Endothelial cell of umbilical vein (primary cell): ENCODE measurements at regions of chr3 and their contacts with region 1.

Region 1: GRCh38 chr3:124878561-124879336 is 8.4 kb downstream of the ITGB5 start:
- DNase-seq: peak; percentile 94
- H3K4me3 ChIP-seq: no peak overlapping the region
- H3K27ac ChIP-seq: peak overlapping the region; percentile 91
- H3K4me1 ChIP-seq: peaks cover 34% of the 10 kb centered on the region
- H3K27me3 ChIP-seq: no peaks in the 10 kb centered on the region
- CTCF ChIP-seq: no peak
- POLR2A ChIP-seq: peak; percentile 57

Region 2: DNA sequence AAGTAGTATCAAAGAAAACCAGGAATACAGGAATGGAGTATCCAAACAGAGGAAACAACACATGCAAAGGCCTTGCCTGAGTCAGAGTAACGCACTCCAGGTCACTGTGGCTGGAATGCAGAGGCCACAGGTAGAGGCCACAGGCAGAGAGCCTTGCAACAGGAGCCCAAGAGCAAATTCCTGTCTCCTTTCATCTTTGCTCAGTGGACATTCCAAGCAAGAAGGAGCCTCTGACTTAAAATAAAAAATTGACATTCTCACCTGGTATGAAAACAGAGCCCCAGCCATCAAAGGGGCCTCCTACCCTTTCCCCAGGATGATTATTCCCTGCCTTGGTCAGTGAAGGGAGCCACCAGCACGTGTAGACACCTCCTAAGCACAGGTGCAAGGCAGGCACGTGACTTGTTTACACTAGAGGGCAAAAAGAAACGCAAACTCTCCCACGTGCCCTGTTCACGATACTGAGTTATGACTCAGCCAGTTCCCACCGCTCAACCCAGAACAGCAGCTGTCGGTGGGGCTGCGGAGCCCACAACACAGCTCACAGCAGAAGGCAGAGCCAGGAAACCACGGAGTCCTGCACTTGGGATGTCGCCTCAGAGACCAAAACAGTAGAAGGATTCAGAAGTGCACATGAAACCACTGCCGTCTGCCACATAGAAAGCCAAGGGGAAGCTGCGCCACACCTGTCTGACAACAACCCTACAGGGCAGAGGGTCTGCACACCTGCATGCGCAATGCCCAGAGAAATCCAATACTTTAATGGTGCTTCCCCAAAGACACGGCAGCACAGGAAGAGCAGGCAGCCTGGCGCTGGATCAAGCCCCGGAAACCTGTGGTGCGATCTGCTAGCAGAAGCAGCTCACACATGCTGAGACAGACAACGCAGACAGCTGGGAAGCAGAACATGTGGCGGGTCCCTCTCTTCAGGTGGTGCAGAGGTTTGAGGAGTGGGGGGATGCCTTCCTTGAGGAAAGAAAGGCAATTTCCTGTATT is 43.7 kb before region 1 on chr3:
- CTCF ChIA-PET with region 1: interaction called, 3 read pairs
- POLR2A ChIA-PET with region 1: interaction called, 3 read pairs
- dilution Hi-C with region 1: no loop called
- intact Hi-C with region 1: loop called (anchors 1 kb)
- DNase-seq: peak; percentile 90
- H3K4me3 ChIP-seq: no peak overlapping the region
- H3K27ac ChIP-seq: peak overlapping the region; percentile 25
- H3K4me1 ChIP-seq: peaks cover 44% of the 10 kb centered on the region
- H3K27me3 ChIP-seq: no peaks in the 10 kb centered on the region
- CTCF ChIP-seq: no peak
- POLR2A ChIP-seq: no peak

Region 3: DNA sequence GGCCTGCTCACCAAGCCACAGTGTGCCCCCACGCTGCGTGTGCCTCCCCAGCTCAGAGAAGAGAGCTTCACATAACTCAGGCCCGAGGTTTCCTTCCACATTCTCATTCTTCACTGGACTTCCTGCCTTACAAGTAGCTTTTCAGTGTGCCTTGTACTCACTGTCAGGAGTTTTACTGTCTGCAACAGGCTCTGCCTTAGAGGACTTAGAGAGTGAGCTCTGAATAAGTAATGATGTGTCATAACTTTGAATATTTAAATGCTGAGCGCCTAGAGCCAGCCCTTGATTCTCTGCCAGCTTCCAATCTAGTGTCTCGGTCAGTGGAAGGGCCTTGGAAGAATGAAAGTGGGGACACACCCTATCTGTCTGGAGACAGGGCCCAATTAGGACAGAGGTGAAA is 33.3 kb before region 1 on chr3:
- CTCF ChIA-PET with region 1: interaction called, 11 read pairs
- POLR2A ChIA-PET with region 1: no interaction called
- dilution Hi-C with region 1: no loop called
- intact Hi-C with region 1: no loop called
- DNase-seq: peak; percentile 70
- H3K4me3 ChIP-seq: no peak overlapping the region
- H3K27ac ChIP-seq: peak overlapping the region; percentile 11
- H3K4me1 ChIP-seq: peaks cover 9% of the 10 kb centered on the region
- H3K27me3 ChIP-seq: no peaks in the 10 kb centered on the region
- CTCF ChIP-seq: no peak
- POLR2A ChIP-seq: no peak